HEK293 (cell line): ENCODE measurements at regions of chr10 and their contacts with region 1.

Region 1: GRCh38 chr10:77173615-77174461 is 463.8 kb downstream of the KCNMA1 start:
- H3K4me3 ChIP-seq: no peak overlapping the region
- H3K27ac ChIP-seq: no peak overlapping the region
- H3K4me1 ChIP-seq: no peaks in the 10 kb centered on the region
- CTCF ChIP-seq: peak; percentile 85

Region 2: DNA sequence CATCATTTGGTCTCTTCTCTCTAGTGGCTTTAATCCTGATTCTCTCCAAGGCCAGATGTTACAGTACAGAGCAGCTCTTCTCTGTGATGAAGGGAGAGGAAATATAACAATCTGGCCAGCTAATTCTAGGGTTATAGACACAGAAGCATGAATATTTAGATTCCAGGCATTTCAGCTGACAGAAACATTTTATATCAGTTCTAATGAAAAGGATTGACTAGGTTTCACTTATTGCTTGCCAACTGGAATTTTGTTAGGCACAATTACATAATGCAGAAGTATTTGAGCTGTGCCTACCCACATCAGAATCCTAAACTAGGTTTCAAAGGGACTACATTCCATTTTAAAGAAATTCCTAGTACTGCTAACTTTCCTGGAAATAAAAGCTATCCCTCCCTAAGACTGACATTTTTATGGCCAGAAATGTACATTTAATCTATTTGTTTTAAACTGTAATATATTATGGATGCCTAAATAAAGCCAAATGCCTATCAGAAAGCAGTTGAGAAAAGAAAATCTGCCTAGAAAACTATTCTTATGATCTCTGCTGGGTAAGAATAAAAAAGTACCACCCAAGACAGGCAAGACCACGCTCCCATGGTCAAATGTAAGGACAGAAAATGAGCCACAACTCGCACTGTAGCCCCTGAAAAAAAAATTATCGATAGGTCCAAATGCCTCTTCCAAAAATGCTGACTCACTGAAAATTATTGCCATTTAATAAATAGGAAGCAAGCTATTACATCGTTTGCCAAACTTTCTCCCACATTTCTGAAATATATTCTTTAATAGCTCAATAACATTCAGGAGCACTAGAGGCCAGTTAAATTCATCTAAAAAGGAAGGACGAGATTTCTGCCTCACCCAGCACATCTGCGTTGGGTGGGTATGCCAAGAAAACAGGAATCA is 34.3 kb before region 1 on chr10:
- CTCF ChIA-PET with region 1: no interaction called
- POLR2A ChIA-PET with region 1: no interaction called
- H3K4me3 ChIP-seq: no peak overlapping the region
- H3K27ac ChIP-seq: no peak overlapping the region
- H3K4me1 ChIP-seq: no peaks in the 10 kb centered on the region
- CTCF ChIP-seq: no peak

Region 3: GRCh38 chr10:77251297-77252013 is 77.6 kb after region 1 on chr10:
- CTCF ChIA-PET with region 1: interaction called, 35 read pairs
- POLR2A ChIA-PET with region 1: no interaction called
- H3K4me3 ChIP-seq: no peak overlapping the region
- H3K27ac ChIP-seq: no peak overlapping the region
- H3K4me1 ChIP-seq: peaks cover 12% of the 10 kb centered on the region
- CTCF ChIP-seq: peak; percentile 73

Region 4: DNA sequence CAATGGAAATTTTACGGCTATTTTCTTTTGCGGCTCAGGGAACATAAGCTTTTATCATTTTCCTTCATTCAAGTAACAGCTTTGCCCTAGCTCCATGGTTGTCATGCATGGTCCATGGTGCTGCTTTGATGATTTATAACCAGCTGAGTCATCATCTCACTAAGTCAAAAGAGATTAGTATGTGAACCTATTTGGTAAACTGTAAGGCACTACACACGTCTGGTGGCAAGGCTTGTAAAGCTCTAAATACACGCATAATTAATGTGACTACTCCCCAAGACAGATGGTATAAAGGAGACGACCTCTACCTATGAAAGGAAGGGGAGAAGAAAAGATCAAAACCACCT is 123.5 kb after region 1 on chr10:
- CTCF ChIA-PET with region 1: interaction called, 19 read pairs
- POLR2A ChIA-PET with region 1: no interaction called
- H3K4me3 ChIP-seq: no peak overlapping the region
- H3K27ac ChIP-seq: no peak overlapping the region
- H3K4me1 ChIP-seq: peaks cover 6% of the 10 kb centered on the region; the same call in 1 of the 2 replicates
- CTCF ChIP-seq: no peak

Region 5: GRCh38 chr10:77641788-77642397 is 468.1 kb after region 1 on chr10:
- CTCF ChIA-PET with region 1: interaction called, 512 read pairs
- POLR2A ChIA-PET with region 1: interaction called, 4 read pairs
- H3K4me3 ChIP-seq: no peak overlapping the region
- H3K27ac ChIP-seq: no peak overlapping the region
- H3K4me1 ChIP-seq: no peaks in the 10 kb centered on the region
- CTCF ChIP-seq: peak; percentile 31; the same call in 1 of the 2 replicates

Region 6: GRCh38 chr10:77756319-77757232 is 582.7 kb after region 1 on chr10:
- CTCF ChIA-PET with region 1: interaction called, 11 read pairs
- POLR2A ChIA-PET with region 1: no interaction called
- H3K4me3 ChIP-seq: no peak overlapping the region
- H3K27ac ChIP-seq: no peak overlapping the region
- H3K4me1 ChIP-seq: no peaks in the 10 kb centered on the region
- CTCF ChIP-seq: peak; percentile 83